ENCODE measurements at regions of chr15 and their contacts with region 1.

Region 1: GRCh38 chr15:52568601-52569256 is at the start of gene ARPP19:
- DNase-seq: peak; percentile 96
- H3K4me3 Mint-ChIP-seq: peak within 1 kb of the TSS; percentile 77
- H3K27ac Mint-ChIP-seq: peak within 1 kb of the TSS; percentile 85
- H3K4me1 Mint-ChIP-seq: peaks cover 5% of the 10 kb centered on the region
- H3K27me3 Mint-ChIP-seq: no peaks in the 10 kb centered on the region
- CTCF ChIP-seq: no peak
- total RNA-seq, gene ARPP19: 172 and 213 TPM in 2 replicates

Region 2: GRCh38 chr15:52481915-52482314 is 86.8 kb before region 1 on chr15:
- CTCF ChIA-PET with region 1: no interaction called
- POLR2A ChIA-PET with region 1: no interaction called
- intact Hi-C with region 1: no loop called
- DNase-seq: no peak
- H3K4me3 Mint-ChIP-seq: no peak overlapping the region
- H3K27ac Mint-ChIP-seq: no peak overlapping the region
- H3K4me1 Mint-ChIP-seq: peaks cover 38% of the 10 kb centered on the region
- H3K27me3 Mint-ChIP-seq: no peaks in the 10 kb centered on the region
- CTCF ChIP-seq: no peak

Region 3: DNA sequence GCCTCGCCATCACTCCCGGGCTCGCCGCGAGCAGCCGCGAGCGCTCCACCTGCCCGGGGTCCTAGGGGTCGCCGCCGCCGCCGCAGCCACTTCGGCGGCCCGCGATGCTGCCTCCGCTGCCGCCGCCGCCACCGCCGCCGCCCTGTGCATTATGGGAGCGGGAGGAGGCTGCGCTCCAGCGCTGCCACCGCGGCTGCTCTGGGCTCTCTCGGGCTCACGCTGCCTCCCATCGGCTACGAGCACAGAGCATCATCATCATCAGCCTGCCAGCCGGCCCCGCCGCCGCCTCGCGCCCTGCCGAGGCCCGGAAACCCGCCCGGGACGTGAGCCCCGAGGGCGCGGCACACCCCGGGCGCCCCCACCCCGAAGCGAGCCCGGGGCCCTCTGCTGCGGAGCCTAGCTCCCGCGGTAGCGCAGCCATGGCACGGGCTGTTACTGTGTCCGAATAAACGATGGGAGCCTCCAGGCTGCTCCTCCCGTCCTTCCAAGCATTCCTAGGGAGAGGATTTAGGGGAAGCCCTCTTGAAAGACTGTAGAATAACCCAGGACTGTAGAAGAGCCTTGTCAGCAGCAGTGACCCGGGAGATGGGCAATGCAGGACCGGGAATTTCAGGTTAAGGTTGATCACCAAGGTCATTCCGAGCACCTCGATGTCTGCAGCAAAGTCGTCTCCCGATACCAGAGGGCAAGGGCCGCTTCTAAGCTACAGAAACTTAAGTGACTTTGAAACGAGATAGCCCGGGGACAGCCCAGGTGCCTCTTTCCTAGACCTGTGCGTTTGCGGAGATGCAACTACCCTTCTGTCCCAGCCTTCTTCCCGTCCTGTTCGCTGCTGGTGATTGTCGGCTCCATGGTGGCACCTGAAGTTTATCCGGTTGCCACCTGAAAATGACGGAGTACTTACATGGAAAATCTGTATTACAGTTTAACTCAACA is 39.5 kb before region 1 on chr15:
- CTCF ChIA-PET with region 1: interaction called, 3 read pairs
- POLR2A ChIA-PET with region 1: interaction called, 8 read pairs
- intact Hi-C with region 1: loop called (anchors 2 kb)
- DNase-seq: peak; percentile 65
- H3K4me3 Mint-ChIP-seq: peak overlapping the region; percentile 78
- H3K27ac Mint-ChIP-seq: no peak overlapping the region
- H3K4me1 Mint-ChIP-seq: no peaks in the 10 kb centered on the region
- H3K27me3 Mint-ChIP-seq: no peaks in the 10 kb centered on the region
- CTCF ChIP-seq: no peak

Region 4: GRCh38 chr15:52558196-52558595 is 10.5 kb before region 1 on chr15:
- CTCF ChIA-PET with region 1: interaction called, 4 read pairs
- POLR2A ChIA-PET with region 1: interaction called, 10 read pairs
- intact Hi-C with region 1: loop called (anchors 1 kb)
- DNase-seq: peak; percentile 86
- H3K4me3 Mint-ChIP-seq: peak overlapping the region; percentile 61
- H3K27ac Mint-ChIP-seq: peak overlapping the region; percentile 88
- H3K4me1 Mint-ChIP-seq: peaks cover 41% of the 10 kb centered on the region
- H3K27me3 Mint-ChIP-seq: no peaks in the 10 kb centered on the region
- CTCF ChIP-seq: no peak

Region 5: DNA sequence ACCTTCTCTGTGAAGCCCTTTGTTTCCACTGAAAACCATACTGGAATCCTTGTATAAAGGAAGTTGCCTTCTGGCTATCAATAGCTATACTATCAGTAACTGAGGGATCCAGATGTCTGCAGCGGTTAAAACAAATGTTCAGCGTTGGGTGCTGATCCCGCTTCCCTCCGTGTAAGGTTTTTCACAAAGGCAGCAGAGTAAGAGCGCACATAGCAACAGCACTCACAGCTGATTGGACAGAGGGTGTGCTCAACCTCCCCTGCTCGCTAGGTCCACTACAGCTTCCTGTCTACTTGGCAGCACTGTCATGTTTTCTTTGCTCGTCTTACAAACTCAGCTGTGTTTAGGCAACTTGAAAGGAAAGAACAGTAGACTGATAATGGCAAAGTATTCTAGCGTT is 83.1 kb after region 1 on chr15:
- CTCF ChIA-PET with region 1: no interaction called
- POLR2A ChIA-PET with region 1: interaction called, 4 read pairs
- intact Hi-C with region 1: loop called (anchors 5 kb)
- DNase-seq: peak; percentile 90
- H3K4me3 Mint-ChIP-seq: peak overlapping the region; percentile 61
- H3K27ac Mint-ChIP-seq: peak overlapping the region; percentile 94
- H3K4me1 Mint-ChIP-seq: peaks cover 38% of the 10 kb centered on the region
- H3K27me3 Mint-ChIP-seq: no peaks in the 10 kb centered on the region
- CTCF ChIP-seq: no peak

Region 6: GRCh38 chr15:52735231-52736089 is 166.7 kb after region 1 on chr15:
- CTCF ChIA-PET with region 1: interaction called, 5 read pairs
- POLR2A ChIA-PET with region 1: no interaction called
- intact Hi-C with region 1: loop called (anchors 10 kb)
- DNase-seq: peak; percentile 81
- H3K4me3 Mint-ChIP-seq: no peak overlapping the region
- H3K27ac Mint-ChIP-seq: no peak overlapping the region
- H3K4me1 Mint-ChIP-seq: peaks cover 1% of the 10 kb centered on the region
- H3K27me3 Mint-ChIP-seq: no peaks in the 10 kb centered on the region
- CTCF ChIP-seq: peak; percentile 81

Measured in MCF 10A (cell line).